PC-9 (cell line): ENCODE measurements at regions of chr4 and their contacts with region 1.

Region 1: DNA sequence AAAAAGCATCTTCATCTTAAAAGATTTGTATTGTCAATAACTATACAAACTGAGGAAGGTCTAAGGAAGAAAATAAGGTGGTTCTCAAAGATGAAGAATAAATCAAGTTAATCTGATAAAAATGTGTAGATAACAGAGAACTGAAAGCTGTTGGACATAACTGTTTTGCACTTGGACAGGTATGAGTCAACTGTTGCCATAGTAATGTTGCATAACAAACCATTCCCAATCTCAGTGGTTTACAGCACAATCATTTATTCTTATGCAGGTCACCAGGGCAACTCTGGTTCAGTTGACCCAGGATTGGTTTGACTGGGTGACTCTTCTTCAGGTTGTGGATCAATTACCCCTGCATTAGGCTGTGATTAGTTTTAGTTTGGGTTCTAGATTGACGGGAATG is 2197.7 kb downstream of the ARAP2 start:
- DNase-seq: peak; percentile 31 to 73
- H3K4me3 ChIP-seq: no peak overlapping the region
- H3K27ac ChIP-seq: no peak overlapping the region
- H3K4me1 ChIP-seq: peaks cover 6% of the 10 kb centered on the region; the same call in 1 of the 2 replicates
- H3K27me3 ChIP-seq: no peaks in the 10 kb centered on the region
- CTCF ChIP-seq: no peak

Region 2: DNA sequence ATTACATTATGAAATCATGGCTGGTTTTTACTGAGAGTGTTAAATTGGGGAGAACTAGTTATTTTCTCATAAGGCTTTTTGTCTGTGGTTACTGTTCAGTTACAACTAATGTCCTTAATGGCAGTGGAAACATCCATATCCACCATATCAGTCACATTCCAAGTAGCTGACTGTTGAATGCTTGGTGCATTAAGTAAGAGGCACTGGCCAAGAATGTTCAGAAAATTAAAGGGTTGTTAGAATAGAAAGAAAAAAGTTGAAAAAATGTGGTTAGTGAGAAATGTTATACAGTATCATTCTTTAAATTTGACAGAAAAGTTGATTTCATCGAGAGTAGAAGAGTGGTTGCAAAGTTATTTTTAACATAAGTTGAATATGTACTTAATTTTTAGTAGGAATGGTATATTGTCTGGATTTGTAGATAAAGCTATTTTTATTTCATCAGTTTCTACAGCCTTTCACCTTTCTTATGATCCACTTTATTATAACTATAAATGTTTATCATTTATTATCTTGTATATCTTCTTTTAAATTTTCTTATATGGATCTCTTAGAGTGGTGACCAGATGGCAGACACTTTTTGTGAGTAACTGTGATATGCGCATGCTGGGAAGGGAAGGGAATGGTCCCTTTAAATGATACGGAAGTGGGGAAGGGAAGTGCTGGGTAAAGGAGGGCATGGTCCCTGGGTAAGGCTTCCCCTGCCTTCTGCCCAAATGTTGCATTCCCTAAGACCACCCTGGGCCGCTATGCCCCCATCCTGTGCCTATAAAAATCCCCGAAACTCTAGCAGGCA is 209.3 kb before region 1 on chr4:
- CTCF ChIA-PET with region 1: no interaction called
- POLR2A ChIA-PET with region 1: no interaction called
- intact Hi-C with region 1: loop called (anchors 10 kb)
- DNase-seq: peak in 1 of 2 experiments; percentile 48
- H3K4me3 ChIP-seq: no peak overlapping the region
- H3K27ac ChIP-seq: no peak overlapping the region
- H3K4me1 ChIP-seq: no peaks in the 10 kb centered on the region
- H3K27me3 ChIP-seq: no peaks in the 10 kb centered on the region
- CTCF ChIP-seq: no peak

Region 3: DNA sequence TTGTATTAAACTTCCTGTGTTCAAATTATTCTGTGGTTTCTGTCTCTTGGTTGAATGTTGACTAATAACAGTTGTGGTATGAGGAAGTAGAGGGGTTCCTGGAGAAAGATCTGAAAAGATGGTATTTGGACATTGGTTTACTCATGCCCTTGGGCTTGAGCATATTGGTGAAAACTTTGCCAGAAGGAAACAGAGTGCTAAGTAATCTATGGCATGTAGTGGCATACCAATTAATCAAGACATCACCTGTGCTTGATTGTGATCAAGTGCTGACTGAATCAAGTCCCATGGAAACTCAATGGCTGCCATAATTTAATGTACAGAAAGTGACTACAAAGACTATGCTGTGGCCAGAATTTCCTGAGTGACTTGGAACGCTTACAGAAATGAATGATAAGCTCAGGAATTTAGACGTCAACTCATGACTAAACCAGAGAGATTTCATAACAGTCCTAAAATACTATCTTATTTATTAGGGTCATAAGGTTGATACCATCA is 134.8 kb after region 1 on chr4:
- CTCF ChIA-PET with region 1: no interaction called
- POLR2A ChIA-PET with region 1: no interaction called
- intact Hi-C with region 1: loop called (anchors 5 kb)
- DNase-seq: peak; percentile 54 to 98
- H3K4me3 ChIP-seq: no peak overlapping the region; the same call in 1 of the 2 replicates
- H3K27ac ChIP-seq: peak overlapping the region; percentile 83
- H3K4me1 ChIP-seq: peaks cover 41% of the 10 kb centered on the region
- H3K27me3 ChIP-seq: no peaks in the 10 kb centered on the region
- CTCF ChIP-seq: no peak

Region 4: DNA sequence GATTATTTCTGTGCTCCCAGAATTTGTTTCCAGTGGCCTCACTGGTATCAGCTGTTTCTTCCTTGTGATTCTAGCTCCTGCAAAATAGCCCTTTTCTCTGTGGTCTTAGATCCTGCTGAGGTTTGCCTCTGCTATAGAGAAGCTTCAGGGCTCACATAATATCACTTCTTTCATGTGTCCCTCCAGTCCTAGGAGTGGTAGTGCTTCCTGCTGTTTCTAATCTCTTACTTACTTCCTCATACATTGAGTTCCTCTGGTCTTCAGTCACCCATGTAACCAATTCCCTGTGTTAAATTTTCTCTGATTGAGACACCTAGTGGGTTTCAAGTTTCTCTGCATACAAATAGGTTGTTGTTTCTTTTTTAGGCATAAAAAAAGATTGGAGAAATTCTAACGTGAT is 629.8 kb after region 1 on chr4:
- CTCF ChIA-PET with region 1: no interaction called
- POLR2A ChIA-PET with region 1: no interaction called
- intact Hi-C with region 1: loop called (anchors 10 kb)
- DNase-seq: peak; percentile 10 to 61
- H3K4me3 ChIP-seq: no peak overlapping the region
- H3K27ac ChIP-seq: no peak overlapping the region
- H3K4me1 ChIP-seq: no peaks in the 10 kb centered on the region
- H3K27me3 ChIP-seq: no peaks in the 10 kb centered on the region
- CTCF ChIP-seq: no peak

Region 5: DNA sequence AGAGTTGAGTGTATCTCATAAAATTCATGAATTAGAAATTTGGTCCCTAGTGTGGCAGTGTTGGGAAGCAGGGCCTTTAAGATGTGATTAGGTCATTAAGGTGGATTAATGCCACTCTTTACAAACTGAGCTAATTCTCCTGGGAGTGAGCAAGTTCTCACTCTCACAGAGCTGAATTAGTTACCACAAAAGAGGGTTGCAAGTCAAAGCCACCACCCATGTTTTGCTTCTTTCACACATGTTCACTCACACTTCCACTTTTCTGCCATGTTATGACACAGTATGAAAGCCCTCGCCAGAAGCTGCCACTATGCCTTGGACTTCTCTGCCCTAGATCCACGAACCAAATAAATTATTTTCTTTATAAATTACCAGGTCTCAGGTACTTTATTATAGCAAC is 1865.6 kb after region 1 on chr4:
- CTCF ChIA-PET with region 1: no interaction called
- POLR2A ChIA-PET with region 1: no interaction called
- intact Hi-C with region 1: loop called (anchors 5 kb)
- DNase-seq: no peak
- H3K4me3 ChIP-seq: no peak overlapping the region
- H3K27ac ChIP-seq: no peak overlapping the region
- H3K4me1 ChIP-seq: no peaks in the 10 kb centered on the region
- H3K27me3 ChIP-seq: no peaks in the 10 kb centered on the region
- CTCF ChIP-seq: no peak